ENCODE measurements at regions of chr6 and their contacts with region 1.

Region 1: DNA sequence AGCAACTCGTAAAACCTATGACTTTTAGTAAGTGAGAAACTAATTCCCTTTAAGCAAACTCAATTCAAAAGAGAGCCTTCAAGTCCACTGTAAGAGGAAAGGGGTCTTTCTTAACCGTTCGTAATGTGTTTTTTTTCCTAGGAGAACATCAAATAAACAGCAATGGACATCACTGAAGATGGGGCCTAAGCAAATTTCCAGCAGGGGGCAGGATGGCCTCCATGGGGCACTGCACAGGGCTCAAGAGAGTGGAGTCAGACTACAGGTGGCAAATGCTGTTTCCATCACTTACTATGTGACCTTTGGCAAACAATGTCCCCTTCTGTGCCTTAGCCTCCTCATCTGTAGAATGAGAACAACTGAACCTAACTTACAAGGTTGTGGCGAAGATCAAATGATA is 88.7 kb downstream of the ARHGAP18 start:
- DNase-seq: no peak
- CTCF ChIP-seq: peak; percentile 20

Region 2: DNA sequence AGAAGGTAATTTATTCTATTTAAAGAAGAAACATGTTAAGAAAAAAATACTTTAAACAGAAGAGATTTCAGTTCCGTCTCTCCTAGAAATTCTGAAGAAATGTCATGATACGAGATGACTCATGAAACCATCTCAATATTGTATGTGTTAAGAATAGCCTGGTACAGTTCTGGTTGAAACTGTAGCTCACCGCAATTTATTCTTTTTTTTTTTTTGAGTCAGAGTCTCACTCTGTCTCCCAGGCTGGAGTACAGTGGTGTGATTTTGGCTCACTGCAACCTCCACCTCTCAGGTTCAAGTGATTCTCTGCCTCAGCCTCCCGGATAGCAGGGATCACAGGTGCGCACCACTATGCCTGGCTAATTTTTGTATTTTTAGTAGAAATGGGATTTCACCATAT is 14.6 kb before region 1 on chr6:
- CTCF ChIA-PET with region 1: interaction called, 11 read pairs
- POLR2A ChIA-PET with region 1: no interaction called
- DNase-seq: no peak
- CTCF ChIP-seq: no peak

Measured in GM10248 (cell line).